Endothelial cell of umbilical vein (primary cell): ENCODE measurements at regions of chr2 and their contacts with region 1.

Region 1: GRCh38 chr2:170098626-170099312 is 79.2 kb upstream of the MYO3B start:
- DNase-seq: peak; percentile 87
- H3K4me3 ChIP-seq: no peak overlapping the region
- H3K27ac ChIP-seq: no peak overlapping the region
- H3K4me1 ChIP-seq: peaks cover 9% of the 10 kb centered on the region
- H3K27me3 ChIP-seq: no peaks in the 10 kb centered on the region
- CTCF ChIP-seq: no peak
- POLR2A ChIP-seq: no peak

Region 2: GRCh38 chr2:169185711-169186110 is 913.1 kb before region 1 on chr2:
- CTCF ChIA-PET with region 1: no interaction called
- POLR2A ChIA-PET with region 1: no interaction called
- dilution Hi-C with region 1: no loop called
- intact Hi-C with region 1: loop called (anchors 5 kb)
- DNase-seq: no peak
- H3K4me3 ChIP-seq: no peak overlapping the region
- H3K27ac ChIP-seq: no peak overlapping the region
- H3K4me1 ChIP-seq: peaks cover 13% of the 10 kb centered on the region
- H3K27me3 ChIP-seq: no peaks in the 10 kb centered on the region
- CTCF ChIP-seq: no peak
- POLR2A ChIP-seq: no peak

Region 3: DNA sequence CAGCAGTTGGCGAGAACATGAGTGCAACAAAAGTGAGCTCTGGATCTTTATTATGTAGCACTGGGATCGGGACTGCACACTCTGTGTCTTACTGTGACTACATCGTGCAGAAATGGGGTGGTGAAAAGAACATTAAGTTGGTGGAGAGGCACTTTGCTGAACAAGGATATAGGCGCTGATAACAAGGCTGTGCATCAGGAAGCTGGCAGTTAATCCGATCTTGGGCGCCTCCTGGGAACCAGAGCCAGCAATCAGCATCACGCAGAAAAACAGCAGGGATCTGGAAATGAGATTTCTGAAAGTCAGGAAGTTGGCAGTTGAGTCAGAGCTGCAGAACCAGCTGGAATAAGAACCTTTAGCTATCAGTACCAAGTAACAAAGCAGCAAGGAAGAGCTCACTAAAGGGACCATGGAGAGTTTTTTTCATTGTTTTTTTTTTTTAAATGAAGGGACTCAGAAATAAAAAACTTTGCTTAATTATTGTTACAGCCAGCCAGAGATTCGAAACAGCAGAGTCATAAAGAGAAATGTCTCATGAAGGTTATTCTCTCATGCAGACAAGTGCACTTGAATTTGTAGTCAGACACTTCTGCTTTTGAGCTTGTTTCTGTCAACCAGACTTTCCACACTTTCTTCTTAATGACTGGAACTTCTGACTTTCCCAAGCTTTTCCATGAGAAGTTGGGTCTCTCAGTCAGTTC is 56.4 kb after region 1 on chr2:
- CTCF ChIA-PET with region 1: no interaction called
- POLR2A ChIA-PET with region 1: no interaction called
- dilution Hi-C with region 1: no loop called
- intact Hi-C with region 1: loop called (anchors 5 kb)
- DNase-seq: peak; percentile 95
- H3K4me3 ChIP-seq: peak overlapping the region in 1 of 3 experiments; percentile 8
- H3K27ac ChIP-seq: peak overlapping the region; percentile 69
- H3K4me1 ChIP-seq: peaks cover 28% of the 10 kb centered on the region
- H3K27me3 ChIP-seq: no peaks in the 10 kb centered on the region
- CTCF ChIP-seq: no peak
- POLR2A ChIP-seq: peak; percentile 27

Region 4: DNA sequence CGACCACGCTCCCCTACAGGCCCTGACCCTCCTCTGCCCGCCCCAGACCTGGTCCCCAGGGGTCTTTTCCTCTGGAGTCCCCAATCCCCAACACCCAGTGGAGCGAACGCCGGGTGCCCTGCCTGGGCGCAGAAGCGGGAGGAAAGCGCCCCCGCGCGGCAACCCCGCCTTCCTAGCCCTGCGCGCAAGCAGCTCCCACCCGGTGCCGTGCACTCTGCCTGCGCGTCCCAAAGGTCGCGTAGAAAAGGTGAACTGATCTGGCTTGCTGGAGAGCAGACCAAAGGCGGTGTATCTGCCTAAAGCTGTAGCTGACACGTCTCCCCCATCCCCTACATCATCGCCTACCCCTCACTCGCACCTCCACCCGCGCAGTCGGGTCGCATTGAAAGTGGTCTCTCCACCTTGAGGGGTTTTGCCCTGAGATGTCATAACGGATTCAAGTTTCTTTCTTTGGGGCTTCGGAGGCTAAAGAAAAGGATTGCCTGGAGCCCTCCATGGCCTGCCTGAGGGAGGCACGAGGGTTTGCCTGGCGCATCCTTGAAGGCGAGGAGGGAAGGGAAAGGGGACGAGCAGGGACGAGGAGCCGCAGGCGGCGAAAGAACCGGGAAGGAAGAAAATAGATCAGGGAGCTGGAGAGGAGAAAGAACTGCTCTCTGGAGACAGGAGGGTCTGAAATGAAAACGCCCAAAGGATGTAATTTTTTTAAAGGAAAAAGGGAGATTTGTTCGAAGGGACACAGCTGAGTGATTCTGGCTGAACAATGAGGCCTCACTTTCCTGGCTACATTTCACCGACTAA is 723.7 kb after region 1 on chr2:
- CTCF ChIA-PET with region 1: no interaction called
- POLR2A ChIA-PET with region 1: no interaction called
- dilution Hi-C with region 1: no loop called
- intact Hi-C with region 1: no loop called
- DNase-seq: no peak
- H3K4me3 ChIP-seq: no peak overlapping the region
- H3K27ac ChIP-seq: no peak overlapping the region
- H3K4me1 ChIP-seq: peaks cover 11% of the 10 kb centered on the region
- H3K27me3 ChIP-seq: peaks cover 75 to 77% of the 10 kb centered on the region in 2 experiments
- CTCF ChIP-seq: peak; percentile 22 to 41
- POLR2A ChIP-seq: no peak